Activated T-helper 2 cell treated with anti-CD3 and anti-CD28 coated beads, Interferon-gamma antibody, Interleukin-2, Interleukin-4, amounts not matched to agents 10 μg/mL and 5 μg/mL and 100 μg/mL, durations not matched to agents 14 hours and 24 hours and 36 hours (primary cell): ENCODE measurements at regions of chr10 and their contacts with region 1.

Region 1: DNA sequence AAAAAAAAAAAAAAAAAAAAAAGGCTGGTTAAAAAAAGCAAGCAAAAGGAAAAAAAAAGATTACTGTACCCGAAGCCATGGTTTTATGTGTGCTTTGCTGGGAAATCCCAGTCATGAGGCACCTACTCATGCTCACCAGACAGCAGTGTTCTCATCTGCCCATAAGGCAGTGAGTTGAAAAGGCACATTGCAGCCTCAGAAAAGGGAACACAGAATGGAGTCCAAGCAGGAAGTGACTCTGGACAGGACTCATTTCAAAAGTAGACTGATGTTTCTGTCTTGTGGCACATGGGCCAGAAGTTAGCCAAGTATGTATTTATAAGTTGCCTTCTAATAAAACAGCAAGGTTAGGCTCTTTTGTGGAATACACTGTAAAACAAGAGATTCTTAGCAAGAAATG is 40.2 kb downstream of the PDSS1 start:
- DNase-seq: peak; percentile 26
- H3K4me3 Mint-ChIP-seq: no peak overlapping the region
- H3K27ac Mint-ChIP-seq: peak overlapping the region; percentile 96
- H3K4me1 Mint-ChIP-seq: peaks cover 49% of the 10 kb centered on the region
- H3K27me3 Mint-ChIP-seq: no peaks in the 10 kb centered on the region

Region 2: GRCh38 chr10:26725837-26726727 is 11.6 kb before region 1 on chr10:
- intact Hi-C with region 1: loop called (anchors 2 kb)
- DNase-seq: no peak
- H3K4me3 Mint-ChIP-seq: no peak overlapping the region
- H3K27ac Mint-ChIP-seq: peak overlapping the region; percentile 25
- H3K4me1 Mint-ChIP-seq: peaks cover 14% of the 10 kb centered on the region
- H3K27me3 Mint-ChIP-seq: no peaks in the 10 kb centered on the region

Region 3: GRCh38 chr10:26780793-26781601 is 43.3 kb after region 1 on chr10:
- intact Hi-C with region 1: no loop called
- DNase-seq: no peak
- H3K4me3 Mint-ChIP-seq: no peak overlapping the region
- H3K27ac Mint-ChIP-seq: peak overlapping the region; percentile 51
- H3K4me1 Mint-ChIP-seq: peaks cover 45% of the 10 kb centered on the region
- H3K27me3 Mint-ChIP-seq: no peaks in the 10 kb centered on the region

Region 4: DNA sequence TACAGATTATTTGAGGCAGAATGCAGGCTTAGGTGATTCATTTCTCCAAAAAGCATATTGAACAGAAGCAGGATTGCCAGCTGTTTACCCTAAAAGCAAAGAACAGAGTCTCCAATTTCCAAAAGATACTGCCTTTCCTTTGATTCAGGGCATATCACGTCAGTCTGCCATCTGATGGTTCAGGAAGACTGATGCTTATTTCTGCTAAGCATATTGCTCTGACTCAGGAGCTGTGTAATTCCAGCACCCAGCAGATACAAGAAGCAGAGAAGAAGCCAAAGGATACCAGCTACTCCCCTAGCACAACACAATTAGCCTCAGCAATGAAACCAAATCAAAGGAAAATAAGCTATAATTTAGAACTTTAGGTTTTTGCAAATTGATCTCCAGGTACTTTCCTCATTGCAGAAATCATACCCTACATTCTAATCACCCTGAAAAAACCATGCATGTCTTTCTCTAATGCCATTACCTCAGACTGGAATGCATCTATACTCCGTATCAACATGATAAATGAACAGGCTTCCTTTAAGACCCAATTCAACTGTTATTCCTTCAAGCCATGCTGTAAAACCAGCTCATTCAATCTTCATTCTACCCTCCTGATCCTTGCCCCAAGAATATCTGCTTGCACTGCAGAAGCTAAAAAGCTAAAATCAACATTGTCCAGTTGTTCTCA is 68.0 kb after region 1 on chr10:
- intact Hi-C with region 1: loop called (anchors 5 kb)
- DNase-seq: no peak
- H3K4me3 Mint-ChIP-seq: no peak overlapping the region
- H3K27ac Mint-ChIP-seq: no peak overlapping the region
- H3K4me1 Mint-ChIP-seq: peaks cover 53% of the 10 kb centered on the region
- H3K27me3 Mint-ChIP-seq: no peaks in the 10 kb centered on the region